ENCODE measurements at regions of chr3 and their contacts with region 1.

Region 1: GRCh38 chr3:107660306-107660976 is 137.7 kb downstream of the BBX start:
- DNase-seq: peak in 4 of 5 donors; percentile 19 to 36 (median 27)
- H3K4me3 ChIP-seq: no peak overlapping the region
- H3K4me3 Mint-ChIP-seq: no peak overlapping the region
- H3K27ac ChIP-seq: no peak overlapping the region
- H3K27ac Mint-ChIP-seq: no peak overlapping the region
- H3K4me1 ChIP-seq: peaks cover 17% of the 10 kb centered on the region
- H3K4me1 Mint-ChIP-seq: peaks cover 18 to 28% (median 22%) of the 10 kb centered on the region in 4 donors
- H3K27me3 ChIP-seq: no peaks in the 10 kb centered on the region
- H3K27me3 Mint-ChIP-seq: no peaks in the 10 kb centered on the region

Region 2: GRCh38 chr3:106814231-106814630 is 846.2 kb before region 1 on chr3:
- CTCF ChIA-PET with region 1: no interaction called
- POLR2A ChIA-PET with region 1: no interaction called
- intact Hi-C with region 1: no loop called
- DNase-seq: no peak
- H3K4me3 ChIP-seq: no peak overlapping the region
- H3K4me3 Mint-ChIP-seq: no peak overlapping the region
- H3K27ac ChIP-seq: no peak overlapping the region
- H3K27ac Mint-ChIP-seq: no peak overlapping the region
- H3K4me1 ChIP-seq: no peaks in the 10 kb centered on the region
- H3K4me1 Mint-ChIP-seq: no peaks in the 10 kb centered on the region
- H3K27me3 ChIP-seq: no peaks in the 10 kb centered on the region
- H3K27me3 Mint-ChIP-seq: peaks cover 0 to 2% of the 10 kb centered on the region in 2 donors

Region 3: GRCh38 chr3:107670986-107671385 is 10.5 kb after region 1 on chr3:
- CTCF ChIA-PET with region 1: interaction called, 54 read pairs
- POLR2A ChIA-PET with region 1: interaction called, 3 read pairs
- intact Hi-C with region 1: loop called (anchors 2 kb)
- DNase-seq: no peak
- H3K4me3 ChIP-seq: no peak overlapping the region
- H3K4me3 Mint-ChIP-seq: no peak overlapping the region
- H3K27ac ChIP-seq: no peak overlapping the region
- H3K27ac Mint-ChIP-seq: no peak overlapping the region
- H3K4me1 ChIP-seq: no peaks in the 10 kb centered on the region
- H3K4me1 Mint-ChIP-seq: peaks cover 10 to 29% (median 19%) of the 10 kb centered on the region in 4 donors
- H3K27me3 ChIP-seq: no peaks in the 10 kb centered on the region
- H3K27me3 Mint-ChIP-seq: no peaks in the 10 kb centered on the region

Region 4: GRCh38 chr3:107781253-107781652 is 120.8 kb after region 1 on chr3:
- CTCF ChIA-PET with region 1: no interaction called
- POLR2A ChIA-PET with region 1: no interaction called
- intact Hi-C with region 1: no loop called
- DNase-seq: no peak
- H3K4me3 ChIP-seq: no peak overlapping the region
- H3K4me3 Mint-ChIP-seq: no peak overlapping the region
- H3K27ac ChIP-seq: no peak overlapping the region
- H3K27ac Mint-ChIP-seq: no peak overlapping the region
- H3K4me1 ChIP-seq: no peaks in the 10 kb centered on the region
- H3K4me1 Mint-ChIP-seq: no peaks in the 10 kb centered on the region
- H3K27me3 ChIP-seq: no peaks in the 10 kb centered on the region
- H3K27me3 Mint-ChIP-seq: no peaks in the 10 kb centered on the region

Region 5: DNA sequence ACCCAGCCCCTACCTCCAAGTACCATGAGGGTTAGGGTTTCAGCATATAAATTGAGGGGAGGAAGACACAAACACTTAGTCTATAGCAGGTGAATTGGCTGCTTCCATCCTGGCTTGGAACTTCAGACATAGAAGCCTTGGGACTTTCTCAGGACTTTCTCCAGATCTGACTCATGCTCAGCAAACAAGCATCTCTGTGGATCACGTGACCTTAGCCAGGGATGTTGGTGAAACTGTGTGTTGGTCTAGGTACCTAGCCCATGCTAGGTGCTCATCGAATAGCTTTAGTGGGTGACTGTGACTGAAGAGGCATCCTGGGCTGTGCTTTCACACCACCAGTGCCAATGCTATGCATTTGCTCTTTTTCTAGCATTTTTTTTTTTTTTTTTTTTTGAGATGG is 371.5 kb after region 1 on chr3:
- CTCF ChIA-PET with region 1: no interaction called
- POLR2A ChIA-PET with region 1: no interaction called
- intact Hi-C with region 1: no loop called
- DNase-seq: no peak
- H3K4me3 ChIP-seq: no peak overlapping the region
- H3K4me3 Mint-ChIP-seq: no peak overlapping the region
- H3K27ac ChIP-seq: no peak overlapping the region
- H3K27ac Mint-ChIP-seq: peak overlapping the region in 3 of 7 donors; percentile 43 to 80 (median 47)
- H3K4me1 ChIP-seq: no peaks in the 10 kb centered on the region
- H3K4me1 Mint-ChIP-seq: peaks cover 9 to 25% (median 14%) of the 10 kb centered on the region in 4 donors
- H3K27me3 ChIP-seq: no peaks in the 10 kb centered on the region
- H3K27me3 Mint-ChIP-seq: no peaks in the 10 kb centered on the region

Measured in CD4-positive, alpha-beta memory T cell (primary cell).